ENCODE measurements at regions of chr2 and their contacts with region 1.

Region 1: GRCh38 chr2:197057959-197058358 is 131.5 kb upstream of the PGAP1 start:
- DNase-seq: no peak
- H3K4me3 Mint-ChIP-seq: no peak overlapping the region
- H3K27ac Mint-ChIP-seq: no peak overlapping the region
- H3K4me1 Mint-ChIP-seq: peaks cover 15% of the 10 kb centered on the region
- H3K27me3 Mint-ChIP-seq: no peaks in the 10 kb centered on the region

Region 2: DNA sequence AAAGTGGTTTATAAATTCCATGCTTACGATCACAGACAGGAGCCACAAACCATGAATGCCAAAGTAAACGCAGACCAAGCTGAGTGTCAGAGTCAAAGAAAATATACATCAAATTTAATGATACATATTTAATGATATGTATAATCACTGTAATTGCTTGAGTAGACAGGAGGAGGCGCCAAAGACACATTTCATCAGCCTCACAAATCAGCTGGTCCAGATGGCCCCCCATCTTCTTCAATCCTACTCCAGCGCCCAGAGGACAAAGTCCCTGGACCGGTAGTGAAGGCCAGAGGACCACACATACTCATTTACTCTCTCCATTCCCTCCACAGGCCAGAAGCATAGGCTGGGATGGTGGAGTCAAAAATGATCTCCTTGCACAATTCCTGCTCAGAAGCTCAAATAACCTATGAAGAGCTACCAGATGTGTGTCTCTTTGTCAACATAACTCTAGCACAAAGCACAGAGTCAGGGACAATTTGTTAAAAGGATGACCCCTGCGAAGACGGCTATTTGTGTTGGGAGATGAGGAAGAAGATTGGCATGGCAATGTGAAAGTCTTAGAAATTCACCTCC is 17.9 kb after region 1 on chr2:
- CTCF ChIA-PET with region 1: interaction called, 12 read pairs
- POLR2A ChIA-PET with region 1: no interaction called
- DNase-seq: no peak
- H3K4me3 Mint-ChIP-seq: no peak overlapping the region
- H3K27ac Mint-ChIP-seq: no peak overlapping the region
- H3K4me1 Mint-ChIP-seq: peaks cover 33% of the 10 kb centered on the region
- H3K27me3 Mint-ChIP-seq: no peaks in the 10 kb centered on the region

Region 3: DNA sequence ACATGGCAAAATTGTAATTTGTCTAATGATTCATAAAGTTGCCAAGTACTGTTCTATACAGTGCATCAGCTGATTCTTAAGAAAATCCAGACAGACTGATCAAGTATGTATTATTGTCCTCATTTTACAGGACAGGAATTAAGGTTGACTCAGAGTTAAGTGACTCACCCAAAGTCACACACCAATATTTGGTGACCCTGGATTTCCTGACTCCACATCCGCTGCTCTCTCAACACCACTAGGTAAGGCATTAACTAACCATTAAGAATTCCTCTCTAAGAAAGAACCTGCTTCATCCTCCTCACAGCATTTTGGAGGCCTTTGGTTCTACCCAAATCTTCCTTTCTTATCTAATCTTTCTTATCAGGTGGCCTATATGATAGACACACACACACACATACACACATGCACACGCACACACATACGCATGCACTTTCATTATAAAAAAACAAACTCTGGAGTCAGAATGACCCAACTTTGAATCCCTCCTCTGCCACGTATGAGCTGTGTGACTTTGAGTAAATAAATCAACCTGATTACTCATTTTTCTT is 101.8 kb after region 1 on chr2:
- CTCF ChIA-PET with region 1: no interaction called
- POLR2A ChIA-PET with region 1: no interaction called
- DNase-seq: no peak
- H3K4me3 Mint-ChIP-seq: no peak overlapping the region
- H3K27ac Mint-ChIP-seq: peak overlapping the region; percentile 10
- H3K4me1 Mint-ChIP-seq: peaks cover 70% of the 10 kb centered on the region
- H3K27me3 Mint-ChIP-seq: no peaks in the 10 kb centered on the region